Endothelial cell of umbilical vein (primary cell): ENCODE measurements at regions of chr10 and their contacts with region 1.

Region 1: DNA sequence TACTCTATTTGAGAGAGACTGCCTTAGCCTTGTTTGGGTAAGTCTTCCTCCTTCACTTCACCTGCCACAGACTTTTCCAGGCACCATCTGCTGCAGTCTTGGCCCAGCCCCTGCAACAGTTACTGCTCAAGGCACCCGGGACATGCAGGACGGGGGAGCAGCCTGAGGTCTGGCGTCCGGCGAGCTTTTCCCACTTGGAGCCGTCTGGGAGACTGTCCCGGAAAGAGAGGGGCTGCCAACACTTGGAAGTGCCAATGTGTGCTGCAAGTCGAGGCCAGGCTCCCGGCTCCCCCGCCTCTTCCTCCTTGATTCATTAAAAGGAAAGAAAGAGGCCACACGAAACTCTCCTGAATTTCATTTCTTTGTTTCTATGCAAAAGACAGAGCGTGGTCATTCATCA is 13.7 kb downstream of the HTRA1 start:
- DNase-seq: peak; percentile 69
- H3K4me3 ChIP-seq: peak overlapping the region in 1 of 3 experiments; percentile 15
- H3K27ac ChIP-seq: peak overlapping the region; percentile 97
- H3K4me1 ChIP-seq: peaks cover 38% of the 10 kb centered on the region
- H3K27me3 ChIP-seq: no peaks in the 10 kb centered on the region
- CTCF ChIP-seq: no peak
- POLR2A ChIP-seq: no peak

Region 2: GRCh38 chr10:122374237-122374869 is 100.7 kb before region 1 on chr10 and contains the start of gene PLEKHA1:
- CTCF ChIA-PET with region 1: no interaction called
- POLR2A ChIA-PET with region 1: no interaction called
- dilution Hi-C with region 1: no loop called
- intact Hi-C with region 1: loop called (anchors 1 kb)
- DNase-seq: peak; percentile 96
- H3K4me3 ChIP-seq: peak within 1 kb of the TSS; percentile 85 to 93 (median 89)
- H3K27ac ChIP-seq: peak within 1 kb of the TSS; percentile 84
- H3K4me1 ChIP-seq: peaks cover 15% of the 10 kb centered on the region
- H3K27me3 ChIP-seq: no peaks in the 10 kb centered on the region
- CTCF ChIP-seq: no peak
- POLR2A ChIP-seq: peak; percentile 56
- total RNA-seq, gene PLEKHA1: 58.0 and 58.8 TPM in 2 replicates

Region 3: GRCh38 chr10:122485670-122486069 is 10.6 kb after region 1 on chr10:
- CTCF ChIA-PET with region 1: no interaction called
- POLR2A ChIA-PET with region 1: no interaction called
- dilution Hi-C with region 1: no loop called
- intact Hi-C with region 1: loop called (anchors 1 kb)
- DNase-seq: peak; percentile 72
- H3K4me3 ChIP-seq: no peak overlapping the region
- H3K27ac ChIP-seq: peak overlapping the region; percentile 13
- H3K4me1 ChIP-seq: peaks cover 7% of the 10 kb centered on the region
- H3K27me3 ChIP-seq: no peaks in the 10 kb centered on the region
- CTCF ChIP-seq: no peak
- POLR2A ChIP-seq: no peak

Region 4: GRCh38 chr10:122504610-122504950 is 29.5 kb after region 1 on chr10:
- CTCF ChIA-PET with region 1: interaction called, 4 read pairs
- POLR2A ChIA-PET with region 1: interaction called, 3 read pairs
- dilution Hi-C with region 1: no loop called
- intact Hi-C with region 1: loop called (anchors 1 kb)
- DNase-seq: peak; percentile 94
- H3K4me3 ChIP-seq: no peak overlapping the region
- H3K27ac ChIP-seq: peak overlapping the region; percentile 11
- H3K4me1 ChIP-seq: peaks cover 9% of the 10 kb centered on the region
- H3K27me3 ChIP-seq: no peaks in the 10 kb centered on the region
- CTCF ChIP-seq: no peak
- POLR2A ChIP-seq: no peak